Cardiac septum (tissue), 1 donor: ENCODE measurements at regions of chr10 and their contacts with region 1.

Region 1: DNA sequence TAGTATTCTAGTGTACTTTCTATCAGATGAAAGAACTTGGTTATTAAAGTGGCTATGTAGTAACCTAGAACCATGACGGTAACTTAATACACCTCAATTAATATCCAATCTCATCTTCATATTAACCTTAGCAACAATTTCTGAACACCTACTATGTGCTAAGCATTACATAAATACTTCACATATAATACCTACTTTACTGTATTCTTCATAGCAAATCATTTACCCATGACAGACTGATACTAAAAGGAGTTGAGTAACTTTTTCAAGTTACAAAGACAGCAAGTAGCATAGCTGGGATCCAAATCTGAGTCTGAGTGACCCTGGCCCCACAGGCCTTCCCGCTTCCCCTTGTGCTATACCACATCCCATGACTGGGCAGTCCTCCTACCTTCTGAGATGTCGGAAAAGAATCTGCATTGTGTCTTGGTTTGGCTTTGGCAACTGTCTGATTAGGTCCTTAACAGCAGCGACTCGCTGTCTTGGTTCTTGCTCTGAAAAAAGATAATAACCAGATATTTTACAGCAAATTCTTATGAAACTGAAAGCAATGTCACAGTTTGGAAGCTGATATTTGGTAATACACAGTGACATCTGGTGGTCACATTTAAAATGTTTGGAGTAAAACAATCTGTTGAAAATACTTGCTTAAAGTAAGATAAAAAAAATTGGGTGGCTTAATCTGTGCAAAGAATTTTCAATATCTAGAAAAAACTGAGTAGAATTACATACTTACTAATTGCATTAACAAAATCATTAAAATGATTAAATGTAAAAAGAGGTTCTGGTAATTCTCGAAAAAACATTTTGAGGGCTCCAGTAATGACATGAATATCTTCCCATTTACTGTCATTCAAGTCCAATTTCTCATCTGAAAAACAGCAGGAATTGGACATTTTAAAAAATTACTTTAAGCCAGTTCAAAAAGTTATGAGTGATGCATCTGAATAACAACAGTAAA is 120.1 kb downstream of the ARHGAP12 start:
- DNase-seq: no peak

Region 2: GRCh38 chr10:30727524-30727923 is 1081.0 kb before region 1 on chr10:
- intact Hi-C with region 1: loop called (anchors 5 kb)
- DNase-seq: no peak

Region 3: DNA sequence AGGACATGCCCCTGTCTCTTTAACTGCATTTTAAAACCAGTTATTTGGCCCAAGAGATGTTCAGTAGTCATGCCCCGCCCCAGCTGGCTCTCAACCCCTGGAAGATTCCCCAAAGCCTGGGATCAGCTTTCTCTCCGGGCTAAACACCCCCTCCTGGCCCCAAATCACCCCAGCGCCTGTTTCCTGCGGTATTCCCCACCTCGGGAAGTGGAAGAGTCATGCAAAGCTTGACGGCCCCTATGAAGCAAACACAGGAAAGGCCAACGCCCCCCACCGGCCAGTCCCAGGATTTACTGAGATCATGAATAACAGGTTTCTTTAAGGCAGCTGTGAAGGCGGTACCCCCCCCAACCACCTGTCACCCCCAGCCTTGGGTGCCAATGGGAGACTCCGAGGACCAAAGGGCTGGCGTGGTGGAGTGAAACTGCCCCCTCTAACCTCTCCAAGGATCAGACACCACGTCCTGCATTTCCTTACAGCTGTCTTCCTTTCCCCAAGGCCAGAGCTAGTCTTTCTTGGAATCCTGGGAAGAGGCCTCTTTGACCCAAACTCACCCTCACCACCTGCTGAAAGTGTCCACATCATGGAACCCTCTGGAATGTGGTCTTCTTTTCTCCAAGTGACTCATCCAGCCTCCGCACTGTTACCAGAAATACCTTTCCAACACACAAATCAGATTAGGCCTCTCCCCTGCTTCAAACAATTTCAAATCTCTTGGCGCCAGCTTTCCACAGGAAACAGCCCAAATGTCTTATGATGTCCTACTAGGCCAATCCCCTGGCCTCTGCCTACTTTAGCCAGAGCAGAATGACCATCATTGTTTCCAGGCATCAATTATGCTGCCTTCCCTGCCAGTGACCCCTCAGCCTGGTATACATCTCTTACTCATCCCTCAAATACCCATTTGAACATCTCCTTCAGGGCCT is 188.0 kb before region 1 on chr10:
- intact Hi-C with region 1: loop called (anchors 5 kb)
- DNase-seq: peak; percentile 85

Region 4: GRCh38 chr10:31650010-31650409 is 158.5 kb before region 1 on chr10:
- intact Hi-C with region 1: no loop called
- DNase-seq: peak; percentile 92

Region 5: DNA sequence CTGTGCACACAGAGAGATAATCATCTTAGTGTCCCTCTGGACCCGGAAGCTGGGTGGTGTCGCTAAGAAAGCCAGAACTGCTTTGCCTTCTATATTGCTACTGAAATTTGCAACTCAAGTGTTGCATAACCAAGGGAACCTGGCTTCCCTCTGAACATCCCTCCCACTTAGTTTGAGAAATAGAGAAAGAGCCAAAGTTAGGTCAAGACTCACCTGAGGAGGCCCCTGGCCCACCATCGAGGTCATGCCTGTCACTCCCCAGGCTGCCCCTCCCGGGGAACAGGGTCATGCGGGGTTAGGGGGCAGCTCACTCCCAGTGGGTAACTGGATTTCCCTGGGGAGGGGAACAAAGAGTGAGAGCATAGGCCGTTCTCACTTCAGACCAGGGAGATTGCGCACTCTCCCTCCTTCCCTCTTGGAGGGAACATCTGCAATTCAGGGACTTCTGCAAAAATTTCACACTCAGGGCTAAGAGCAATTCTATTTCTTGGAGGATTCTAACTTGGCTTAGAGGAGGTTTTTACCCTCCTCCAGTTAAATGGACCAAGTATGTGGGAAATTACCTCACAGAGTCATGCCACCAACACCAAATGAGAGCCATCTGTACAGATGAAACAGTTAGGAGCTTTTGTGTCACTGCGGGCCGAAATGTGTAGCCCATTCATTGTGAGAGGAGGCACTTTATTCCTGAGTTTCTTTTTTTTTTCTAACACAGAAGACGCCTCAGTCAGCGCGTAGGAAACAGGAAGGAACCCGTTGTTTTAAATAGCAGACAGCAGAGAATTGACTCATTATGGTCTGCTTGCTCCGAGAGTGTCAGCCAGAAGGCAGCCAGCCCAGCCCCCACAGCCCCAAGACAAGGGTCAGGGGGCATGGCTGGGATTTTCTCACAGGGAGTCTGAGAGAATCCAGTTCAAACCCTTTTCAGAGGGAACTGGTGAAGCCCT is 101.2 kb before region 1 on chr10:
- intact Hi-C with region 1: loop called (anchors 5 kb)
- DNase-seq: peak; percentile 88

Region 6: DNA sequence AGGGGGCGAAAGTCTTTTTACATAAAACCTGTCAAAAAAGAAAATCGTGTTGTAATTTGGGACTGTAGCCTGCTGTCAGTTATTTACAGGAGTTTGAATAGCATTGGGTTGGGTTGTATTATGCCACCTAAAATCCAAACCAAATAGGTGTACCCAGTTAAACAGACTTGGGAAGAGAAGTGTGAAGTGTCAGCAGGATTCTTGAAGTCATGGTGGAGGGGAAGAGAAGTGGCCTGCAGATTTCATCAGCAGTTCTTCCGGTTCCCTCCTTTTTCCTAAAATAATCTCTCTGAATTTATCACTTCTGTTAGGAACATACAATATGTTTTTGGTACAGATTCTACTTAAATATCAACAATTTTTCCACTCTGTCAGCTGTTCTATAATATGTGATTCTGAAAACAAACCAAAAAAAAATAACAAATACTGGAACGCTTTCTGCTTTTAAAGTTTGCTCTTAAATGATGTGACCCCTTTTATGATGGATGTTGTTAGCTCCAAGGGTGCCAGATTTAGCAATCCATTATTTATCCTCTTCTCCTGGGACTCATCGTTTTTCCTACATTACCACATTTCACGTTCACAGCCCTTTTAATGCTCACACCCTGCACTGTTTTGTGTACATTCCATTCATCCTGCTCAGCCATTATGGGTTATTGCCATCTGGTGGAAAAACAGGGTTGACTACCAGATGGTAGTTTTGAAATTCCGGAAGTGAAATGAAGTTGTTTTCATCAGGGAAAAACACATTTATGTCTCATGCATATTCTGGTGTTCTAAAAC is 138.8 kb after region 1 on chr10:
- intact Hi-C with region 1: no loop called
- DNase-seq: no peak

Region 7: GRCh38 chr10:32163071-32163761 is 354.7 kb after region 1 on chr10:
- intact Hi-C with region 1: no loop called
- DNase-seq: peak; percentile 53